Common myeloid progenitor, CD34-positive (primary cell): ENCODE measurements at regions of chr12 and their contacts with region 1.

Region 1: GRCh38 chr12:1117970-1118563 is 127.0 kb downstream of the ERC1 start:
- DNase-seq: peak; percentile 74 to 91 (median 85)
- H3K4me3 ChIP-seq: no peak overlapping the region
- H3K27ac ChIP-seq: no peak overlapping the region
- H3K4me1 ChIP-seq: no peaks in the 10 kb centered on the region
- H3K27me3 ChIP-seq: no peaks in the 10 kb centered on the region

Region 2: DNA sequence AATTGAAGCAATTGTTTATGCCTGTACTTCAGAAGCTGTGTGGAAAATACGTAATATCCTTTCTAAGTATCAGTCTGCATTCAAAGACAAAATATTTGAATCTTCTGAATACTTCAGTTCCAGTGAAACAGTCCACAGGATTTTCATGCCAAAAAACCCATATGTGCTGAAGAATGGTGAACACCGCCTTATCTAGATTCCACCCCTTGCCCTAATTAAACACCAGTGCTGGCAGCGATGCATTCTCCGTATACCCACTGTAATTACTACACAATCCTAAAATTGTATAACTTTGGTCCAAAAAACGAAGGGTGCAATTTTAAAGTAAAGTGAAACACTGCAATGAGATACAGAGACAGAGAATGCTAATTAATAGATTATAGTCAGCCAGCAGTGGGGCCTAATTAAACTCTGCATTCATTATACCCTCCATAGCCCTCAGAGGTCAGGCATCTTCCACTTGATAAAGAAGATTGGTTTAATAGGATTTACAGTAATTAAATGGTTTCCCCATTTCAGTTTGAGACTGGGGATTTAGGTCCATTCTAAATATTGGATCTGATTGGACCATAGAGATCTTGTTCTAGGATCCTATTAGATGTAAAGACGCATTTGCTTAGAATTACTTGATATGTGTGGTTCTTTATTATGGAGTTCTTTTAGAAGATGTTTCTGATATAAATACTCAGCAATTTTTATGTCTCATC is 83.2 kb before region 1 on chr12:
- CTCF ChIA-PET with region 1: no interaction called
- POLR2A ChIA-PET with region 1: no interaction called
- DNase-seq: no peak
- H3K4me3 ChIP-seq: no peak overlapping the region
- H3K27ac ChIP-seq: no peak overlapping the region
- H3K4me1 ChIP-seq: no peaks in the 10 kb centered on the region
- H3K27me3 ChIP-seq: no peaks in the 10 kb centered on the region

Region 3: GRCh38 chr12:1104088-1104800 is 13.8 kb before region 1 on chr12:
- CTCF ChIA-PET with region 1: interaction called, 26 read pairs
- POLR2A ChIA-PET with region 1: interaction called, 3 read pairs
- DNase-seq: no peak
- H3K4me3 ChIP-seq: no peak overlapping the region
- H3K27ac ChIP-seq: no peak overlapping the region
- H3K4me1 ChIP-seq: peaks cover 0 to 16% (median 9%) of the 10 kb centered on the region in 4 experiments
- H3K27me3 ChIP-seq: no peaks in the 10 kb centered on the region

Region 4: GRCh38 chr12:1130164-1130563 is 12.1 kb after region 1 on chr12:
- CTCF ChIA-PET with region 1: interaction called, 14 read pairs
- POLR2A ChIA-PET with region 1: no interaction called
- DNase-seq: peak; percentile 16 to 40 (median 39)
- H3K4me3 ChIP-seq: no peak overlapping the region
- H3K27ac ChIP-seq: no peak overlapping the region
- H3K4me1 ChIP-seq: peaks cover 0 to 9% (median 5%) of the 10 kb centered on the region in 4 experiments
- H3K27me3 ChIP-seq: no peaks in the 10 kb centered on the region

Region 5: DNA sequence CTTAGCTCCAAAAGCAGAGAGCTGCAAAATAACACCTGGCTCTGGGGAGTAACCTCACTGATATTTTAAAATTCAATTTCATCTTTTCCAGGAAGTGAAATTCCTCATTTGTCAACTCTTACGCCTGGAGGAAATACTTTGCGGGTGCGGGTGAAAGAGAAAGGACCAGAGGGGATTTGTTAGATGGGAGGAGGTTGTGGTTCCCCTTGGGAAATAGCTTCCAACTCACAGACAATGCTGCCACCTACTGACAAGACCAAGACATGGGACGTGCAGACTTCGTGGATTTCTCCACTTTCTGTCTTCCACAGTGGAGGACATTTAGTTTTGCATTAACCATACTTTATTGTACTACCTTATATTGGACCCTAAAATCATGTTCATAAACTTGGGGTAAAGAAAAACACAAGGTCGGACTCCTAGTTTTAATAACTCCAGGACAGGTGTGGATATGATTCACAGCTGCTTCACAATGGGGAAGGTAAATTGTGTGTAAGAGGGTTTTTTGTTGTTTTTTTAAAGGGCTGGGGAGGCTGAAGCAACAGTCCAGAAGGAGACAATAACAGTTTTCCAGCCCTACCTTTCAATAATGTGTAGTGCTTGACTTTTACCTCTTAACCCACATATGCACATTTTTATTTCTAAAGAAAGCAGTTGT is 465.5 kb after region 1 on chr12:
- CTCF ChIA-PET with region 1: interaction called, 89 read pairs
- POLR2A ChIA-PET with region 1: interaction called, 4 read pairs
- DNase-seq: peak; percentile 87 to 93 (median 88)
- H3K4me3 ChIP-seq: peak overlapping the region in 3 of 7 experiments; percentile 17 to 61 (median 26)
- H3K27ac ChIP-seq: no peak overlapping the region
- H3K4me1 ChIP-seq: peaks cover 0 to 8% (median 2%) of the 10 kb centered on the region in 4 experiments
- H3K27me3 ChIP-seq: peaks cover 0 to 11% (median 0%) of the 10 kb centered on the region in 5 experiments

Region 6: DNA sequence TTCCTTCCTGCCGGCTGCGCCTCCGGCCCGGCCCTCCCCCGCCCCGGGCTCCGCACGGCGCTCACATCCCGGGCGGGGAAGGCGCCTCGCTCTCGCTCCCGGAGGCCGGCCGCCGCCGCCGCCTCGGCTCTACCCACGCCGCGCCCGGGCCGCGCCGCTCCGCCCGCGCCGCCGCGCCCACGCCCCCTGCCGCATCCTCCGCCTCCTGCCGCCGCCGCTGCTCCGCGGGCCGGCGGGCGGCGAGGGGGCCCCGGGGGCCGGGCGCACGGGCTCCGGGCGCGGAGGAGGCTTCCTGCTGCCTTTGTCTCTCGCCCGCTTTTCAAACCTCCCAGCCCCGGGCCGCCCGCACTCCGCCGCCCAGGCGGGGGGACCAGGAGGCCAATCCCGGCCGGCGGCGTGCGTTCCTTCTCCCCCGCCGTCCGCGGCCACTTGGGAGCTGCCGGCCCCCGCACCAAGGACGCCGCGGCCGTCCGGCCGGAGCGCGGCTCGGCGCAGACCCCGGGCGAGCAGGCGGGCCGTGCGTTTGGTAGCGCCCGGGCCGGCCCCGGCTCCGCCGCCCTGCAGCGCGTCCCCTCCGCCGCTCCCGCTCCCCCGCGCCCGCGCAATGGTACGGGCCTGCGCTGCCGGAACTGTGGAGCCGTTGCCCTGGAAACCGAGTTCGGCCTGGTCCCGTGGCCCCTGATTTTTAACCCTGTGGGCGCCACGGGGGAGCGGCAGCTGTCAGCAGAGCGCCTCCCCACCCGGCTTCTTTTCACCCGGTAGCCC is 476.4 kb after region 1 on chr12 and contains the start of gene FBXL14:
- CTCF ChIA-PET with region 1: interaction called, 17 read pairs
- POLR2A ChIA-PET with region 1: no interaction called
- DNase-seq: peak; percentile 92 to 96 (median 96)
- H3K4me3 ChIP-seq: peak within 1 kb of the TSS; percentile 73 to 95 (median 86)
- H3K27ac ChIP-seq: peak within 1 kb of the TSS; percentile 64 to 89
- H3K4me1 ChIP-seq: peaks cover 15 to 51% (median 41%) of the 10 kb centered on the region in 4 experiments
- H3K27me3 ChIP-seq: no peaks in the 10 kb centered on the region

Region 7: GRCh38 chr12:1605129-1606020 is 487.3 kb after region 1 on chr12:
- CTCF ChIA-PET with region 1: interaction called, 19 read pairs
- POLR2A ChIA-PET with region 1: no interaction called
- DNase-seq: peak; percentile 81 to 82 (median 81)
- H3K4me3 ChIP-seq: peak overlapping the region; percentile 17 to 85 (median 70)
- H3K27ac ChIP-seq: no peak overlapping the region
- H3K4me1 ChIP-seq: peaks cover 9 to 31% (median 21%) of the 10 kb centered on the region in 4 experiments
- H3K27me3 ChIP-seq: peaks cover 0 to 3% (median 0%) of the 10 kb centered on the region in 5 experiments